ENCODE measurements at regions of chr16 and their contacts with region 1.

Region 1: GRCh38 chr16:86854058-86854621 is 275.8 kb downstream of the FOXL1 start:
- DNase-seq: no peak
- ATAC-seq: no peak
- H3K4me3 ChIP-seq: no peak overlapping the region
- H3K27ac ChIP-seq: no peak overlapping the region
- H3K4me1 ChIP-seq: peaks cover 27% of the 10 kb centered on the region
- H3K27me3 ChIP-seq: 0 out of 5 replicates have a peak, but pooled peaks cover 0 to 3% of the 10 kb centered on the region in 2 experiments
- CTCF ChIP-seq: no peak
- EP300 ChIP-seq: no peak
- POLR2A ChIP-seq: no peak
- RAD21 ChIP-seq: no peak

Region 2: GRCh38 chr16:86585821-86586611 is 268.1 kb before region 1 on chr16:
- CTCF ChIA-PET with region 1: no interaction called
- POLR2A ChIA-PET with region 1: no interaction called
- in situ Hi-C with region 1: no loop called
- intact Hi-C with region 1: loop called (anchors 10 kb)
- DNase-seq: no peak
- ATAC-seq: no peak
- H3K4me3 ChIP-seq: no peak overlapping the region
- H3K27ac ChIP-seq: no peak overlapping the region
- H3K4me1 ChIP-seq: no peaks in the 10 kb centered on the region
- H3K27me3 ChIP-seq: peaks cover 2 to 25% of the 10 kb centered on the region in 2 experiments; a peak in 3 of 5 replicates
- CTCF ChIP-seq: no peak
- EP300 ChIP-seq: no peak
- POLR2A ChIP-seq: no peak
- RAD21 ChIP-seq: no peak

Measured in HepG2 (cell line).